Activated CD8-positive, alpha-beta T cell treated with anti-CD3 and anti-CD28 coated beads, Interleukin-2, amount 10 ng/mL, durations not matched to agents 7 days and 5 days (primary cell): ENCODE measurements at regions of chr17 and their contacts with region 1.

Region 1: GRCh38 chr17:2244545-2245525 is 58.8 kb downstream of the SMG6 start:
- DNase-seq: peak; percentile 88
- ATAC-seq: peak; percentile 93
- H3K4me3 Mint-ChIP-seq: no peak overlapping the region
- H3K27ac Mint-ChIP-seq: peak overlapping the region; percentile 72
- H3K4me1 Mint-ChIP-seq: peaks cover 86% of the 10 kb centered on the region
- H3K27me3 Mint-ChIP-seq: no peaks in the 10 kb centered on the region

Region 2: DNA sequence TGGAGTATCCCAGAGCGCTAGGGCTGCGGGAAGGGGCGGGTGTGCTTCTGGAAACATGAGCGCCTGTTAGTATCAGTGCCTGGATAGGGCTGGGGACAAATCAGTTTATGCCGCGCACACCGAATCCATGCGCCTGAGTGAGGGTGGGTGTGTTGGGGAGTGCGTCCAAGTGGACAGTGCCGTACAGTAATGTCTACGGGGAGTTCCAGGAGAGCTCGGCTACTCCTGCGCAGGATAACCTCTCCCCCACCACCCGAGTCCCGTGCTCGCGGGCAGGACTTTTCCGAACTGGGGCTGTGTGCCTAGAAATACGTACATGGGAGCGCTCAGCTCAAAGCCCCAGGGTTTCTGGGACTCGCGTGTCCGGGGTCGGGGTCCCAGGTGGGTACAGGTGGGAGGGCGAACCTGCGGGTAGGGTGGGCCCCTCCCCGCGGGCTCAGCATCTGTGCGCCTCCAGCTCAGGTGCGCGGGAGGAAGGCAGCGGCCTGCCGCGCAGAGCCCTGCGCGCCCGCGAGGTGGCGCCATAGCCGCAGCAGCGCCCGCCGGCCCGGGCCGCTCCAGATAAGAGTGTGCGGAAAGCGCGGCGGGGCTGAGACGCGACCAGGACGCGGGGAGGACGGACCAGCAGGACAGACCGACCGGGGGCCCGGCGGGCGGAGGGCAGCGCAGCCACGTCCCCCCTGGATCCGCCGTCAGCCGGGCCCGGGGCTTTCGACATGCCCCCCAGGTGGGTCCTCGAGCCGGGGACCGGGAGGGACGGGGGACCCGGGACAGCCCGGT is 190.1 kb before region 1 on chr17 and contains the start of gene HIC1:
- CTCF ChIA-PET with region 1: interaction called, 343 read pairs
- POLR2A ChIA-PET with region 1: interaction called, 58 read pairs
- DNase-seq: peak; percentile 85
- ATAC-seq: peak; percentile 54
- H3K4me3 Mint-ChIP-seq: peak within 1 kb of the TSS; percentile 78
- H3K27ac Mint-ChIP-seq: peak within 1 kb of the TSS; percentile 82
- H3K4me1 Mint-ChIP-seq: peaks cover 27% of the 10 kb centered on the region
- H3K27me3 Mint-ChIP-seq: peaks cover 14% of the 10 kb centered on the region
- total RNA-seq, gene HIC1: 66.8 to 70.8 TPM

Region 3: GRCh38 chr17:2094891-2095535 is 149.8 kb before region 1 on chr17:
- CTCF ChIA-PET with region 1: interaction called, 68 read pairs
- POLR2A ChIA-PET with region 1: interaction called, 4 read pairs
- DNase-seq: no peak
- ATAC-seq: no peak
- H3K4me3 Mint-ChIP-seq: no peak overlapping the region
- H3K27ac Mint-ChIP-seq: no peak overlapping the region
- H3K4me1 Mint-ChIP-seq: peaks cover 45% of the 10 kb centered on the region
- H3K27me3 Mint-ChIP-seq: no peaks in the 10 kb centered on the region

Region 4: DNA sequence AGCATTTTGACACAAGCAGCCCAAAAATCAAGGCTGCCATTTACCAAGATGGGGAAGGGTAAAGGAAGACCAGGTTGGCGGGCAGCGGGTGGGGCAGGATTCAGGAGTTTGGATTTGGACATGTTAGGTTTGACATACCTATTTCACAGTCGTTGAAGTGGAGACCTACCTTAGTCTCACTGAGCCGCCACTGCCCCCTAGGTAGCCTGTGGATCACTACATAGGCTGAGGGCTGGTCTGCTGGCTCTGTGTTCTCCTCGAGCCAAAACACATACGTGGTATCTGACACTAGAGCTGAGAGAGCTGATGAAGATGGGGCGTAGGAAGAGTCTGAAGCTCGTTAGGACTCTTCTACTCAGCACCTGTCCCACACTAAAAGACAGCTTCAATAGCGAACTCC is 74.8 kb before region 1 on chr17:
- CTCF ChIA-PET with region 1: interaction called, 10 read pairs
- POLR2A ChIA-PET with region 1: no interaction called
- DNase-seq: peak; percentile 37
- ATAC-seq: no peak
- H3K4me3 Mint-ChIP-seq: no peak overlapping the region
- H3K27ac Mint-ChIP-seq: no peak overlapping the region
- H3K4me1 Mint-ChIP-seq: peaks cover 22% of the 10 kb centered on the region
- H3K27me3 Mint-ChIP-seq: no peaks in the 10 kb centered on the region

Region 5: DNA sequence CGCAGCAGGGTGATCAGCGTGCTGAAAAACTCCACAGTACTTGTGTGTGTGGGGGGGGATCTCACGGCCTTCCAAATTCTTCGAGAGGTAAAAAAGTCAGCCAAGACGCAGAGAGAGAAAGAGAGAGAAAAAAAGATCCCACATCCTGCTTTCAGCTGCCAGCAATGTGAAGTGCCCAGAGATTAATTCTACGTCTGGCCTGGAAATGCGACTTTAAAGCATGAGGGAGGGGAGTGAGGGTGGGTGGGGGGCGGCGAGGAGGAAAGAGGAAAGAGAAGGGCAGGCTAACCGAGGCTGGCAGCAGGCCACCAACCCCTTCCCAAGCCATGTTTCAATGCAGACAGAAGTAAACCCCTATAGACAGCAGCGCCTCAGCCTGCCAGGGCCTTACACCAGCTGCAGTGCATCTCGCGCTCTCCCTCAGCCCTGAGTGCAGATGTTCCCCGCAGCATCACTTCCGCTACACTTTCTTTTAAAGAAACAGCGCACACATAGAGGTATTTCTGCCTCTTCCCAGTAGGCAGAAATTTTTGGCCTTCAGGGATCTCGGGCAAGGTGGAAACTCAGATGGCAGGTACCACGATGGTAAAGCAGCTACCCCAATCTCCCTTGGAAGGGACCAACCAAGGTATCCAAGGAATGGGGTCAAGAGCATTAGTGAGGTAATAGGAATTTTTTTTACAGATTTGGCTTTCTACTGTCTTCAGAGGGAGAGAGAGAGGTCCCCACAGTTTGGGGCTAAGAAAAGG is 29.0 kb before region 1 on chr17:
- CTCF ChIA-PET with region 1: interaction called, 27 read pairs
- POLR2A ChIA-PET with region 1: interaction called, 3 read pairs
- DNase-seq: peak; percentile 87
- ATAC-seq: peak; percentile 99
- H3K4me3 Mint-ChIP-seq: peak overlapping the region; percentile 74
- H3K27ac Mint-ChIP-seq: peak overlapping the region; percentile 96
- H3K4me1 Mint-ChIP-seq: peaks cover 70% of the 10 kb centered on the region
- H3K27me3 Mint-ChIP-seq: no peaks in the 10 kb centered on the region

Region 6: GRCh38 chr17:2266045-2266864 is 21.4 kb after region 1 on chr17:
- CTCF ChIA-PET with region 1: interaction called, 145 read pairs
- POLR2A ChIA-PET with region 1: interaction called, 10 read pairs
- DNase-seq: peak; percentile 96
- ATAC-seq: peak; percentile 82
- H3K4me3 Mint-ChIP-seq: peak overlapping the region; percentile 74
- H3K27ac Mint-ChIP-seq: peak overlapping the region; percentile 99
- H3K4me1 Mint-ChIP-seq: peaks cover 88% of the 10 kb centered on the region
- H3K27me3 Mint-ChIP-seq: no peaks in the 10 kb centered on the region

Region 7: DNA sequence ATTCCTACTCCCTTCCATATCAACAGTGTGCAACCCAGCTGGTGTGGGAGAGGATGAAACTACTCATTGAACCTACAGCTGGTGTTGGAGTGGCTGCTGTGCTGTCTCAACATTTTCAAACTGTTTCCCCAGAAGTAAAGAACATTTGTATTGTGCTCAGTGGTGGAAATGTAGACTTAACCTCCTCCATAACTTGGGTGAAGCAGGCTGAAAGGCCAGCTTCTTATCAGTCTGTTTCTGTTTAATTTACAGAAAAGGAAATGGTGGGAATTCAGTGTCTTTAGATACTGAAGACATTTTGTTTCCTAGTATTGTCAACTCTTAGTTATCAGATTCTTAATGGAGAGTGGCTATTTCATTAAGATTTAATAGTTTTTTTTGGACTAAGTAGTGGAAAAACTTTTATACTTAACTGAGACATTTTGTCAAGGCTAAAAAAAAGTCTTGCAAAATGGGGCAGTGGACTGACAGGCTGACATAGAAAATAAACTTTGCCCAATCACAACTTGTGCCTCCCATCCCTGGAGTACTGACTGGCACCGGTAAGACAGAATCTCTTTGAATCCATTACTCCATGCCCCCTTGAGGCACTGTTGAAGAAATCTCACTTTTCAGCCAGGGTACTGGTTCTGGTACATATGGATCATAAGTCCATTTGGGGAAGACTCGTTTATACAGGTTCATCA is 78.9 kb after region 1 on chr17:
- CTCF ChIA-PET with region 1: no interaction called
- POLR2A ChIA-PET with region 1: no interaction called
- DNase-seq: no peak
- ATAC-seq: no peak
- H3K4me3 Mint-ChIP-seq: no peak overlapping the region
- H3K27ac Mint-ChIP-seq: peak overlapping the region; percentile 67
- H3K4me1 Mint-ChIP-seq: peaks cover 19% of the 10 kb centered on the region
- H3K27me3 Mint-ChIP-seq: no peaks in the 10 kb centered on the region